ENCODE measurements at regions of chr6 and their contacts with region 1.

Region 1: DNA sequence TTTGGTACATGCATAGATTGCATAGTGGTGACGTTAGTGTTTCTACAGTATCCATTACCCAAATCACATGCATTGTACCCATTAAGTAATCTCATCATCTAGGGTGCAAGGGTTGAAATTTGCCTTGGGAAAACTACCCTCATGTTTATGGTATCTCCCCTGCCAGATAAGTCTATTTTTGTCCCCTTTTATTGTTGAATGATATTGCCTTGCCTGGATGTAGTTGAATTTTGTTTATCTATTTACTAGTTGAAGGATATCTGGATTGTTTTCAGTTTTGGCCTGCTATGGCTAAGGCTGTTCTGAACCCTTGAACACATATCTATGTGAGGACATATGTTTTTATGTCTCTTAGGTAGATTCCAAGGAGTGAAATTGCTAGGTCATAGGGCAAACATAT is 13.4 kb downstream of the HLA-DRB1 start:
- H3K4me3 Mint-ChIP-seq: no peak overlapping the region
- H3K27ac Mint-ChIP-seq: peak overlapping the region; percentile 63
- H3K4me1 Mint-ChIP-seq: peaks cover 31% of the 10 kb centered on the region
- H3K27me3 Mint-ChIP-seq: no peaks in the 10 kb centered on the region

Region 2: GRCh38 chr6:32483968-32484636 is 92.1 kb before region 1 on chr6:
- intact Hi-C with region 1: loop called (anchors 10 kb)
- H3K4me3 Mint-ChIP-seq: no peak overlapping the region
- H3K27ac Mint-ChIP-seq: peak overlapping the region; percentile 73
- H3K4me1 Mint-ChIP-seq: peaks cover 28% of the 10 kb centered on the region
- H3K27me3 Mint-ChIP-seq: no peaks in the 10 kb centered on the region

Region 3: GRCh38 chr6:32854376-32855178 is 278.3 kb after region 1 on chr6:
- intact Hi-C with region 1: no loop called
- H3K4me3 Mint-ChIP-seq: peak overlapping the region; percentile 95
- H3K27ac Mint-ChIP-seq: peak overlapping the region; percentile 93
- H3K4me1 Mint-ChIP-seq: peaks cover 69% of the 10 kb centered on the region
- H3K27me3 Mint-ChIP-seq: no peaks in the 10 kb centered on the region

Measured in dendritic cell treated with granulocyte-macrophage colony-stimulating factor and Interleukin-4, amounts not matched to agents 40 ng/mL and 50 ng/mL, for 4 days (primary cell).